Posterior vena cava (tissue), 2 donors: ENCODE measurements at regions of chr17 and their contacts with region 1.

Region 1: DNA sequence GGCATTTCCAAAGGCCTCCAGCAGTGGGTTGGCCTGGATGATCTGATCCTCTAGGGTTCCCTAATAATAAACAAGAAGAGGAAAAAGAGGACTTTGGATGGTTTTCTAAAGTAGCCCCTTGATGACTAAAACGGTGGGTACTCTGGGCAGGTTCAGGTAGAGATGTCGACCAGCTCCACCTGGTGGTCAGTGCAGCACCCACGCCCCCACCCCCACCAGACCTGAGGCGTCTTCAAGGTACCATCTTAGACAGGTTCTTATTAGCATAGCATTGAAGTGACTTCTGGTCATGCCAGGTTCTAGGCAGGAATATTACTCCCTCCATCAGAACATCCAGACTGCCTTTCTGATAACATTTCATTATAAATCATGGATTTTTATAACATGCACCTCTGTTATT is 15.0 kb downstream of the MYH13 start:
- DNase-seq: no peak

Region 2: GRCh38 chr17:10600571-10600970 is 242.8 kb after region 1 on chr17:
- intact Hi-C with region 1: loop called in 1 of 2 experiments (anchors 1 kb)
- DNase-seq: no peak

Region 3: DNA sequence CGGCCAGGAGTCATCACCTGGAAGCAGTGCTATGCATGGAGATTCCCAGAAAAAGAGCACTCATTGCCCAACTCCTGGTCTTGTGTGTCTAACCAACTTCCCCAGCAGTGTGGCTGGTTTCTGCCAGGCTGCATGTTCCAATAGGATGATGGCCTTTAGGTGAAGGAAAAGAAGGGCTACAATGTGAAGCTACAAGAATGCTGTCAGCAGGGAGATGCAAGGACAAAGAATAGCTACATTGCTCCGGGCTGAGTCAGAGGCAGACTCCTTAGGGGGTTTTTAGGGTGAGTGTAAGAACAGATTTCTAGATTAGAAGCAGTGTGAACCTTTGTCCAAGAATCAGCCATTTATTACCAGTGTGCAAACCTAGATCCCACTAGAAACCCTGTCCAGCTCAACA is 1177.5 kb after region 1 on chr17:
- intact Hi-C with region 1: loop called in 1 of 2 experiments (anchors 5 kb)
- DNase-seq: no peak